Transverse colon (tissue), 4 donors: ENCODE measurements at regions of chr15 and their contacts with region 1.

Region 1: GRCh38 chr15:90336705-90337141 is 15.4 kb upstream of the ZNF774 start:
- DNase-seq: no peak
- H3K4me3 ChIP-seq: no peak overlapping the region
- H3K27ac ChIP-seq: no peak overlapping the region
- H3K4me1 ChIP-seq: peaks cover 0 to 29% (median 2%) of the 10 kb centered on the region in 4 donors
- H3K27me3 ChIP-seq: no peaks in the 10 kb centered on the region
- CTCF ChIP-seq: no peak
- EP300 ChIP-seq: no peak
- POLR2A ChIP-seq: no peak

Region 2: DNA sequence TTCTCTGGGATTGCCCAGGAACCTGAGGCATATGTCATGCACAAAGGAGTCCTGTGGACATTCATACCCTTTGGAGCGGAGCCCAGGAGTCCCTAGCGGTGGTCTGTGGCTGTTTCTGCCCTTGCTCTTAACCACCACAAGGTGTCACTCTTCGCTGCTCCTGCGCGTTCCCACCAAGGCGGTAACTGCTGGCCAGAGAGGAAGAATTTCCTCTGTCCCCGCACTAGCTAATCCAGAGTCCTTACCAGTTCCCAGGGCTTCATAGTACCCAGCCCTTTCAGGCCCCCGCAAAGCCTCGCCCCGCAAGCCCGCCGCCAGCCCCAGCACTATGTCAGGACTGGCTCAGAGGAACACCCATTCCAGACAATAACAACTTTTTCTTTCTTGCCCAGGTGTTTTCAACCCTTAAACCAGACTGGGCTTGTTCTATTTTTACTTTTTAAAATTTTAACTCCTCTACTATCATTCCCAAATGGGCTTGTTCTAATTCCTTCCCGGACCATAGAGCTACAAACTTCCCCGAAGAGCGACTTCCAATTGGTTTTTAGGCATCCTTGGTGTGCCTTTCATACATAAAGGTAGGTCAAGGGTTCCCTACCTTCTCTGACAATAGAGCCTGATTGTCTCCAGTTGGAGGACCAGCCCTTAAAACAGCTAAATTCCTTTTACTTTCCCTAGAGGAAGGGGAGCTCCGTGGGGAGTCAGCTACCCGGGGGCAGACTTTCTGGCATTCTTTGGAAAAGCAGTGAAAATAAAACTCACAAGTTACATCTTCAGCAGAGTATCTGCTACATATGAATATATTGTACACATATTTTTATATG is 16.4 kb before region 1 on chr15:
- in situ Hi-C with region 1: no loop called
- intact Hi-C with region 1: no loop called
- DNase-seq: peak; percentile 79
- H3K4me3 ChIP-seq: peak overlapping the region in 1 of 4 donors; percentile 37
- H3K27ac ChIP-seq: peak overlapping the region; percentile 38 to 75 (median 58)
- H3K4me1 ChIP-seq: peaks cover 11 to 28% (median 20%) of the 10 kb centered on the region in 4 donors
- H3K27me3 ChIP-seq: no peaks in the 10 kb centered on the region
- CTCF ChIP-seq: peak; percentile 98 to 99 (median 99)
- EP300 ChIP-seq: no peak
- POLR2A ChIP-seq: no peak

Region 3: DNA sequence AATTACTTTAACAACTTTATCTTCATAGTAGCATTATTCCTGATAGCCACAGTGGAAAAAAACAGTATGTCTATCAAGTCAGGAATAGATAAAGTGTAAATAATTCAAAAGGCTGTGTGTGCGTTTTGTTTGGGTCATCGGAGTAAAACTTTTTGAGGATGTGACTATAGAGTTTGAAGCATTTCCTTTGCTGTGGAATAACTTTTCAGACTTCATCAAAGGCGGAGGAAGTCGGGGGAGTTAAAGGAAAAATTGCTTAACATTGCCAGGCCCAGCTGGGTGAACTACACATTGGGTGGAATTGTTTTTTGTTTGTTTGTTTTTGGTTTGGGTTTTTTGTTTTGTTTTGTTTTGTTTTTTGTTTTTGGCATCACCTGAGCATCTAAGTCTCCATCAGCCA is 122.6 kb after region 1 on chr15:
- in situ Hi-C with region 1: no loop called
- intact Hi-C with region 1: no loop called
- DNase-seq: no peak
- H3K4me3 ChIP-seq: no peak overlapping the region
- H3K27ac ChIP-seq: no peak overlapping the region
- H3K4me1 ChIP-seq: peaks cover 0 to 12% (median 1%) of the 10 kb centered on the region in 4 donors
- H3K27me3 ChIP-seq: no peaks in the 10 kb centered on the region
- CTCF ChIP-seq: no peak
- EP300 ChIP-seq: no peak
- POLR2A ChIP-seq: no peak

Region 4: GRCh38 chr15:90482124-90483011 is 145.6 kb after region 1 on chr15:
- in situ Hi-C with region 1: loop called in 1 of 4 experiments (anchors 10 kb)
- intact Hi-C with region 1: no loop called
- DNase-seq: peak; percentile 51
- H3K4me3 ChIP-seq: no peak overlapping the region
- H3K27ac ChIP-seq: peak overlapping the region in 1 of 4 donors; percentile 32
- H3K4me1 ChIP-seq: peaks cover 0 to 4% (median 0%) of the 10 kb centered on the region in 4 donors
- H3K27me3 ChIP-seq: no peaks in the 10 kb centered on the region
- CTCF ChIP-seq: peak; percentile 61 to 79 (median 77)
- EP300 ChIP-seq: no peak
- POLR2A ChIP-seq: no peak

Region 5: GRCh38 chr15:90915808-90916440 is 579.2 kb after region 1 on chr15:
- in situ Hi-C with region 1: no loop called
- intact Hi-C with region 1: no loop called
- DNase-seq: peak; percentile 53
- H3K4me3 ChIP-seq: no peak overlapping the region
- H3K27ac ChIP-seq: peak overlapping the region in 1 of 4 donors; percentile 11
- H3K4me1 ChIP-seq: no peaks in the 10 kb centered on the region
- H3K27me3 ChIP-seq: no peaks in the 10 kb centered on the region
- CTCF ChIP-seq: no peak
- EP300 ChIP-seq: no peak
- POLR2A ChIP-seq: no peak